Mammary epithelial cell (primary cell): ENCODE measurements at regions of chr11 and their contacts with region 1.

Region 1: GRCh38 chr11:8225589-8226036 is 38.1 kb downstream of the LMO1 start:
- DNase-seq: no peak
- H3K4me3 ChIP-seq: no peak overlapping the region
- H3K27ac ChIP-seq: no peak overlapping the region
- H3K4me1 ChIP-seq: peaks cover 39% of the 10 kb centered on the region
- H3K27me3 ChIP-seq: no peaks in the 10 kb centered on the region
- CTCF ChIP-seq: peak; percentile 63 to 93

Region 2: GRCh38 chr11:8263769-8264410 is 38.3 kb after region 1 on chr11 and contains the start of gene LMO1:
- CTCF ChIA-PET with region 1: no interaction called
- dilution Hi-C with region 1: no loop called
- in situ Hi-C with region 1: no loop called
- intact Hi-C with region 1: loop called (anchors 1 kb)
- DNase-seq: peak; percentile 49
- H3K4me3 ChIP-seq: peak within 1 kb of the TSS; percentile 28 to 42 (median 33)
- H3K27ac ChIP-seq: no peak within 1 kb of the TSS
- H3K4me1 ChIP-seq: peaks cover 31% of the 10 kb centered on the region
- H3K27me3 ChIP-seq: peaks cover 50% of the 10 kb centered on the region
- CTCF ChIP-seq: peak; percentile 76 to 95
- total RNA-seq, gene LMO1: 0.17 to 0.54 TPM

Region 3: GRCh38 chr11:8309862-8310261 is 84.2 kb after region 1 on chr11:
- CTCF ChIA-PET with region 1: no interaction called
- dilution Hi-C with region 1: no loop called
- in situ Hi-C with region 1: no loop called
- intact Hi-C with region 1: loop called (anchors 2 kb)
- DNase-seq: no peak
- H3K4me3 ChIP-seq: no peak overlapping the region
- H3K27ac ChIP-seq: no peak overlapping the region
- H3K4me1 ChIP-seq: no peaks in the 10 kb centered on the region
- H3K27me3 ChIP-seq: peaks cover 2% of the 10 kb centered on the region
- CTCF ChIP-seq: peak; percentile 18 to 57

Region 4: GRCh38 chr11:8328848-8329330 is 103.3 kb after region 1 on chr11:
- CTCF ChIA-PET with region 1: no interaction called
- dilution Hi-C with region 1: no loop called
- in situ Hi-C with region 1: loop called in 1 of 2 experiments (anchors 10 kb)
- intact Hi-C with region 1: no loop called
- DNase-seq: peak; percentile 88
- H3K4me3 ChIP-seq: no peak overlapping the region
- H3K27ac ChIP-seq: no peak overlapping the region
- H3K4me1 ChIP-seq: peaks cover 7% of the 10 kb centered on the region
- H3K27me3 ChIP-seq: no peaks in the 10 kb centered on the region
- CTCF ChIP-seq: peak; percentile 83 to 94

Region 5: DNA sequence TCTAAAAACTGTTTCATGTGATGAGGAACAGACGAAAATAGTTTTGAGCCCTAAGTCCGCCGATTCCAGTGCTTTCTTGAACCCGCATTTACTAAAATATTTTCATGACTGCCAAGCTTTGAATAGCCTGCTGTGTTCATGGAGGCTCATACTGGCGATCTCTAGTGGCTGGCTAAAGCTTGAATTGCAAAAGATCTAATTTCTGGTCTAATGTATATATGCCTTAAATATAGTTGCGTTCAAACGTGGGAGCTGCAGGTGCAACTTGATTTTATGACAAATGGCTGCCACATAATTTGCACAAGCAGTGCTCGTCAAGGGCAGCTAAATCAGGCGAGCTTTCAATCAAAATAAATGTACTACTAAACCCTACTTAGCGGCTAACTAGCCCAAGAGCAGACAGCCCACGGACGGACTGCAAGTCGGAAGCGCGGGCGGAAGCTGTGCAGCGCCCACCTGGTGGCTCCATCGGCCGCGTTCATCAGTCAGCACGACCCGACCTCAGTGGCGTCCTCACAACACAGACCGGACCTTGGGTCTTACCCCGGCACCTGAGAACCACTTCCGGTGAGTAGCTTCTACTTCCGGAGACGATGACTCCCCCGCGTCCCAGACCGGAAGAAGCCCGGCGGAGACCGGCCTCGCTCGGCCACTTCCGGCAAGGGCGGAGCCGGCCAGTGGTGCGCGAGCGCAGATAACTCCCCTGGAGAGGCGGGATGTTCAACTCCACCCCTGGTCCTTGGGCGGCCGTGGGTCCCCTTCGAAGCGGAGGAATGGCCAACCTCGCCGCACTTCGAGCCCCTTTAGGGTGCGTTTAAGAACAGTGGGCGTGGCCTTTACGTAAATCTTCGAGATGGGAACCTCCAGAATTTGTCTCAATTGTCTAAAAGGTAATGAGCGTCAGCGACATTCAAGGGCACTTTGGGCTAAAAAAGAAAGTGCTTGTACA is 463.1 kb after region 1 on chr11:
- CTCF ChIA-PET with region 1: no interaction called
- dilution Hi-C with region 1: no loop called
- in situ Hi-C with region 1: loop called in 1 of 2 experiments (anchors 25 kb)
- intact Hi-C with region 1: loop called (anchors 10 kb)
- DNase-seq: peak; percentile 95
- H3K4me3 ChIP-seq: peak overlapping the region; percentile 51 to 62 (median 52)
- H3K27ac ChIP-seq: peak overlapping the region; percentile 52
- H3K4me1 ChIP-seq: peaks cover 36% of the 10 kb centered on the region
- H3K27me3 ChIP-seq: no peaks in the 10 kb centered on the region
- CTCF ChIP-seq: peak in 1 of 2 donors; percentile 8